GM18951 (cell line): ENCODE measurements at regions of chr5 and their contacts with region 1.

Region 1: GRCh38 chr5:801472-801871 is 16.9 kb upstream of the ZDHHC11B start:
- POLR2A ChIP-seq: no peak

Region 2: GRCh38 chr5:528625-529511 is 272.6 kb before region 1 on chr5:
- in situ Hi-C with region 1: no loop called
- POLR2A ChIP-seq: no peak

Region 3: GRCh38 chr5:543825-544674 is 257.4 kb before region 1 on chr5:
- in situ Hi-C with region 1: no loop called
- POLR2A ChIP-seq: peak; percentile 36

Region 4: DNA sequence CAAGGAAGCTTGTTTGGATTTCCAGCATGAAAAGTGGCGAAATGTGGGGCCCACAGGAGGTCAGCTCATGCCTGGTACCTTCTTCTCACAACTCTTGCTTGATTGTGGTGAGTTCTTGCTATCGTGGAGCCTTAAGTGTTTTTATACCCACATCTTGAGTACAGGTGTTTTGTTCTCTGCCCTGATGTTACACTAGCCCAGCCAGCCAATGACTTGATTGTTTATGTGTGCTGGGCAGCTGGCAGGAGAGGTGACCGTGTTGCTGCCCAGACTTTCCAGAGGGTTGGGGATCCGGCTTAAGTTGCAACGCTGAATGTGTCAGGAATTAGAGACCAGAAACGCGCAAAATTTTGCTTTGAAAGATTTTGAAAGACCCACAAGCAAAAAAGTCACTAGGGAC is 84.3 kb before region 1 on chr5:
- in situ Hi-C with region 1: loop called (anchors 5 kb)
- POLR2A ChIP-seq: no peak